ENCODE measurements at regions of chrX and their contacts with region 1.

Region 1: GRCh38 chrX:69222103-69223090 is 57.1 kb upstream of the PJA1 start:
- DNase-seq: peak; percentile 83
- H3K4me3 ChIP-seq: no peak overlapping the region
- H3K27ac ChIP-seq: no peak overlapping the region
- H3K4me1 ChIP-seq: peaks cover 0 to 9% (median 0%) of the 10 kb centered on the region in 4 donors
- H3K27me3 ChIP-seq: peaks cover 0 to 6% (median 0%) of the 10 kb centered on the region in 3 donors
- CTCF ChIP-seq: peak; percentile 48 to 76 (median 66)
- EP300 ChIP-seq: no peak
- POLR2A ChIP-seq: no peak

Region 2: DNA sequence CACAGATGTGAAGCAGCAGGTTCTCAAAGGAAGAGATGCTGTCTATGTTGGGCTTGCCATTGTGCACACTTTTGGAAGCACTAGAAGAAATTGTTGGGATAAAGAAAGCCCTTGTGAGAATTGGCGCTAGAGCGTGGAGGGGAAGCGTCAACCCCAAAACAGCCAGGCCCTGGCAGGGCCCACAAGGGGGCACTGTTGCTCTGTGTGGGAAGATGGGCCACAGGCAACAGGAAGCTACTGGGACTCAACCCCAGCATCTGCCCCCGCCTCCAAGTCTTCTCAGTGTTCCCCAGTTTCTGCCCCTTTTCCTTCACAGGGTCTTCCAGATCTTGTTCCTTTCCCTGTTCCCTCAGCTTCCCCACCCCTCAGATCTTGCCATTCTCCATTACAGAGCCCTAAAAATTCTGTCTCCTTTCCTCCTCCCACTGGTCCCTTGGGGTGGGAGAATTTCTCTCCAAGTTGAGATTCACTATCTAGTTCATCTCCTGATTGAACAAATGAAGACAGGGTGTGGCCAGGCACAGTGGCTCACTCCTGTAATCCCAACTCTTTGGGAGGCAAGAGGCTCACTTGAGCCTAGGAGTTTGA is 489.4 kb before region 1 on chrX:
- intact Hi-C with region 1: no loop called
- DNase-seq: peak; percentile 78
- H3K4me3 ChIP-seq: no peak overlapping the region
- H3K27ac ChIP-seq: no peak overlapping the region
- H3K4me1 ChIP-seq: no peaks in the 10 kb centered on the region
- H3K27me3 ChIP-seq: no peaks in the 10 kb centered on the region
- CTCF ChIP-seq: peak; percentile 13 to 68 (median 38)
- EP300 ChIP-seq: no peak
- POLR2A ChIP-seq: no peak

Region 3: GRCh38 chrX:69060631-69061408 is 161.6 kb before region 1 on chrX:
- intact Hi-C with region 1: loop called (anchors 10 kb)
- DNase-seq: no peak
- H3K4me3 ChIP-seq: no peak overlapping the region
- H3K27ac ChIP-seq: no peak overlapping the region
- H3K4me1 ChIP-seq: no peaks in the 10 kb centered on the region
- H3K27me3 ChIP-seq: no peaks in the 10 kb centered on the region
- CTCF ChIP-seq: peak in 3 of 4 experiments; percentile 29 to 37 (median 32)
- EP300 ChIP-seq: no peak
- POLR2A ChIP-seq: no peak

Region 4: GRCh38 chrX:69093960-69094871 is 128.2 kb before region 1 on chrX:
- intact Hi-C with region 1: loop called (anchors 2 kb)
- DNase-seq: peak; percentile 74
- H3K4me3 ChIP-seq: no peak overlapping the region
- H3K27ac ChIP-seq: no peak overlapping the region
- H3K4me1 ChIP-seq: no peaks in the 10 kb centered on the region
- H3K27me3 ChIP-seq: no peaks in the 10 kb centered on the region
- CTCF ChIP-seq: peak in 2 of 4 experiments; percentile 40 to 49
- EP300 ChIP-seq: no peak
- POLR2A ChIP-seq: no peak

Region 5: DNA sequence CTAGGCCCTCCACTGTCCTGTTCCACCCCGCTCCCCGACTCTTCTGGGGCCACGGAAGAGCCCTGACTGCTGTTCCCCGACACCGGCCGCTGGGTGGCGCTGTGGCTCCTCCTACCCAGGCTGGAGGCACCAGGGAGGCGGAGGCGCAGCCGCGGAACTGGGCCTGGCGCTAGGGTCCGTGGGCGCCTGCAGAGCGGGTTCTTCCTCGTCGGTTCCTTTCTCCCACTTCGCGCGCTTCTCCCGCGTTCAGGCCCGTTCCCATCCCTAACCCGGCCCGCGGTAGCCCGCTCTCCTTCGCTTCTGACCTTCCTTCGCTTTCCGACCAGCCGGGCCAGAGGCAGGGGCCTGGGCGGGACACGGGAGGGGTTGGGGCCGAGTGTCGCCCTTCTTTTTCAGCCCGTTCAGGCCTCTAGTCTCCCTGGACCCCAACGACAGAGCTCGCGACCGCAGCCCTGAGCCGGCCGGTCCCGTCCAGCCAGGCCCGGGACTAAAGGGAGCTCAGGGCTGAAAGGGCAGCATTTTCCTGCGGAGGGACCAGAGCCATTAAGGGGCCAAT is 316.0 kb after region 1 on chrX:
- intact Hi-C with region 1: no loop called
- DNase-seq: peak; percentile 80
- H3K4me3 ChIP-seq: peak overlapping the region; percentile 19 to 49 (median 44)
- H3K27ac ChIP-seq: peak overlapping the region in 1 of 4 donors; percentile 42
- H3K4me1 ChIP-seq: no peaks in the 10 kb centered on the region
- H3K27me3 ChIP-seq: peaks cover 0 to 6% (median 0%) of the 10 kb centered on the region in 3 donors
- CTCF ChIP-seq: peak; percentile 47 to 69 (median 57)
- EP300 ChIP-seq: no peak
- POLR2A ChIP-seq: no peak

Measured in sigmoid colon (tissue), 7 donors.